Activated CD8-positive, alpha-beta T cell treated with anti-CD3 and anti-CD28 coated beads for 36 hours (primary cell): ENCODE measurements at regions of chr14 and their contacts with region 1.

Region 1: GRCh38 chr14:22478670-22479069 is 110.4 kb downstream of the DAD1 start:
- DNase-seq: no peak
- ATAC-seq: no peak
- H3K4me3 Mint-ChIP-seq: peak overlapping the region; percentile 70
- H3K27ac Mint-ChIP-seq: peak overlapping the region; percentile 81
- H3K4me1 Mint-ChIP-seq: no peaks in the 10 kb centered on the region
- H3K27me3 Mint-ChIP-seq: no peaks in the 10 kb centered on the region
- CTCF ChIP-seq: no peak

Region 2: DNA sequence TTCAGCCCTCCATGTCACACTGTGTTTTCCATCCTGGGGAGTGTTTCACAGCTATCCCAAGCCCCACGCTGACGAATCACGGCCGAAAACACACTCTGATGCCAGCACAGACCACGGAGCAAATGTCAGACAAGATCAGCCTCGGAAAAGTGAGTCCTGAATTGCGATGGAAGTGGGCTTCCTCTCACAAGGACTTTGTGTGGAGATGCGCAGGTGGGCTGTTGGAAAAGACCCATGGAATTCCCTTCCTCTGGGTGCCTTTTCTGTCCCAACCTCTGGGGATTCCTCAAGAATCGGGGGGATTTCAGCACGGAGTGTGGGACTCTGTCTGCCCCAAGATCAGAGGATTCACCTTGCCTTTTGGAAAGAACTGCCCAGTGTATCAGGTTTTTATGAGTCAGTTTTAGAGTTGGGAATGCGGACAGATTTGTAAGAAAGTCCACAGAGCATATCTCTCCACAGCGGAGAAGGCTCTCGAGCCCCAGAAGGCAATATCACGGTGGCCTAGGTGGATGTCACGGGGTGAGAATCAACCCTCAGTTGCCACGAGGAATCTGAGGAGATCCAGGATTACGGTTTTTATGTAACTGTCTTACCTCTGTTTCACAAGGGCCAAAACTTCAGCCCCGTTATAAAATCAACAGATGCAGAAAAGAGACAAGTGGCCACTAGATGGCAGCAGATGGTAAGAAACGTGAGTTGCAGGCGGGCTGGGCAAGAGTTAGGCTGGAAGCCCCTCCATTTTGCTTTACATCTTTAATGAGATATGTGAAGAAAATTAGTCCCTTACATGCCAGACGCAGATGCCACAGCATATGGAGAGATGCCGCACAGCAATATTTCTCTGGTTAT is 91.5 kb before region 1 on chr14:
- CTCF ChIA-PET with region 1: no interaction called
- POLR2A ChIA-PET with region 1: no interaction called
- intact Hi-C with region 1: loop called (anchors 5 kb)
- DNase-seq: no peak
- ATAC-seq: no peak
- H3K4me3 Mint-ChIP-seq: no peak overlapping the region
- H3K27ac Mint-ChIP-seq: no peak overlapping the region
- H3K4me1 Mint-ChIP-seq: no peaks in the 10 kb centered on the region
- H3K27me3 Mint-ChIP-seq: no peaks in the 10 kb centered on the region
- CTCF ChIP-seq: no peak

Region 3: GRCh38 chr14:22464422-22465142 is 14.1 kb before region 1 on chr14:
- CTCF ChIA-PET with region 1: no interaction called
- POLR2A ChIA-PET with region 1: no interaction called
- intact Hi-C with region 1: no loop called
- DNase-seq: no peak
- ATAC-seq: no peak
- H3K4me3 Mint-ChIP-seq: no peak overlapping the region
- H3K27ac Mint-ChIP-seq: no peak overlapping the region
- H3K4me1 Mint-ChIP-seq: no peaks in the 10 kb centered on the region
- H3K27me3 Mint-ChIP-seq: no peaks in the 10 kb centered on the region
- CTCF ChIP-seq: no peak

Region 4: DNA sequence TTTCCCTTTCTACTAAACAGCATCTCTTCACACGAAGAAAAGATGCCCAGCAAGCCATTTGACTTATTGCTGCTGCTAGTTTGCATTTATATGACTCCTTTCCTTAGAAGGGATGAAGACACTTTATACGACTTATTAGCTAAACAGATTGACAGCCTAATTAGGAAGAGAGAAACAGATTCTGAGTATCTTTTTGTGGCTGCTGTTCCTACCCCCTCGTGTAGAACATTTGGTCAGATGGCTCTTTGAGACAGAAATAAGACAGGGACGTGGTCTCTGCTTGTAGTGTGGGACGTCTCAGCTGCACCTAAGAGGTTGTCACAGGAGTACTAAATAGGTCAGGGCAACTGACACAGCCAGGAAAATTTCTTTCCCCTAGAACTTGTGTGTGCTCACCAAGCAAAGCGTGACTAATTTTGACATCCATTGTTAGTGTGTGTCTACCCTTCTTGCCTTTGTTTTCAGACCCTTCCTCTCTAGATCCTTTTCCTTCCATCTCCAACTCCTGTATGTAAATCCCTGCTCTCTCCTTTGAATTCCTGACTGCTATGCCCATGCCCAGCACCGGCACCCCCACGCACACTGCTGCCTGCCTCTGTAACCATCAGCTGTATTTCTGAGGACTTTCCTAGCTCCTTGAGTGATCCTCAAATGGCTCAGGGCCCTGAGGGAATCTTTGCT is 27.2 kb after region 1 on chr14:
- CTCF ChIA-PET with region 1: no interaction called
- POLR2A ChIA-PET with region 1: interaction called, 684 read pairs
- intact Hi-C with region 1: no loop called
- DNase-seq: no peak
- ATAC-seq: peak; percentile 38
- H3K4me3 Mint-ChIP-seq: peak overlapping the region; percentile 79
- H3K27ac Mint-ChIP-seq: peak overlapping the region; percentile 96
- H3K4me1 Mint-ChIP-seq: peaks cover 10% of the 10 kb centered on the region
- H3K27me3 Mint-ChIP-seq: no peaks in the 10 kb centered on the region
- CTCF ChIP-seq: no peak